Esophagus squamous epithelium (tissue), 5 donors: ENCODE measurements at regions of chr5 and their contacts with region 1.

Region 1: GRCh38 chr5:81751009-81751835 is at the start of gene SSBP2:
- DNase-seq: peak; percentile 99
- H3K4me3 ChIP-seq: peak within 1 kb of the TSS; percentile 73 to 97 (median 78)
- H3K27ac ChIP-seq: peak within 1 kb of the TSS; percentile 94 to 99 (median 99)
- H3K4me1 ChIP-seq: peaks cover 11 to 78% (median 31%) of the 10 kb centered on the region in 3 donors
- H3K27me3 ChIP-seq: no peaks in the 10 kb centered on the region
- CTCF ChIP-seq: peak in 1 of 6 experiments; percentile 17
- POLR2A ChIP-seq: peak in 3 of 4 donors; percentile 43 to 81 (median 60)
- total RNA-seq, gene SSBP2: 17.1 to 80.3 (median 24.2) TPM

Region 2: DNA sequence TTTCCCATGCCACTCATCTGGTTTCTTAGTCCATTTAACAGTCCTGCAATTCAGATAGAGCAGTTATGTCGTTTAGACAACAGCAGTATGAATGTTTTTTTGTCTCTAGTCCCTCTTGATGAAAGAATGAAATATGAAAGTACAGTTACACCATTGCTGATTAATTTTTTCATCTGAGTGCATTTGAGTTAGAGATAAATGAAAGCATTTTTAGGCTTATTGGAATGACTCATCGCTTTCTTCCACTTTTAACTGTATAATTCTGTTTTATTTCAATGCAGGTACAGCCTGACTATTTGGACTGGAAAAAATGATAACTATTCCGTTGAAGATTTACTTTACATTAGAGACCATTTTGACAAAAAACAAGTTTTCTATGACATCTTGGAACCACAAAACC is 1209.8 kb before region 1 on chr5:
- intact Hi-C with region 1: no loop called
- DNase-seq: no peak
- H3K4me3 ChIP-seq: no peak overlapping the region
- H3K27ac ChIP-seq: no peak overlapping the region
- H3K4me1 ChIP-seq: no peaks in the 10 kb centered on the region
- H3K27me3 ChIP-seq: no peaks in the 10 kb centered on the region
- CTCF ChIP-seq: no peak
- POLR2A ChIP-seq: no peak

Region 3: GRCh38 chr5:81425569-81425968 is 325.7 kb before region 1 on chr5:
- intact Hi-C with region 1: loop called (anchors 10 kb)
- DNase-seq: no peak
- H3K4me3 ChIP-seq: no peak overlapping the region
- H3K27ac ChIP-seq: peak overlapping the region in 2 of 4 donors; percentile 38 to 47
- H3K4me1 ChIP-seq: peaks cover 4 to 49% (median 7%) of the 10 kb centered on the region in 3 donors
- H3K27me3 ChIP-seq: no peaks in the 10 kb centered on the region
- CTCF ChIP-seq: peak in 5 of 6 experiments; percentile 38 to 65 (median 53)
- POLR2A ChIP-seq: no peak

Region 4: GRCh38 chr5:81506900-81507588 is 244.2 kb before region 1 on chr5:
- intact Hi-C with region 1: loop called (anchors 10 kb)
- DNase-seq: no peak
- H3K4me3 ChIP-seq: no peak overlapping the region
- H3K27ac ChIP-seq: peak overlapping the region in 2 of 4 donors; percentile 35 to 38
- H3K4me1 ChIP-seq: peaks cover 0 to 13% (median 0%) of the 10 kb centered on the region in 3 donors
- H3K27me3 ChIP-seq: no peaks in the 10 kb centered on the region
- CTCF ChIP-seq: peak; percentile 45 to 91 (median 80)
- POLR2A ChIP-seq: no peak

Region 5: GRCh38 chr5:81787474-81788242 is 36.4 kb after region 1 on chr5:
- intact Hi-C with region 1: loop called (anchors 5 kb)
- DNase-seq: no peak
- H3K4me3 ChIP-seq: peak overlapping the region in 1 of 4 donors; percentile 27
- H3K27ac ChIP-seq: peak overlapping the region; percentile 12 to 81 (median 60)
- H3K4me1 ChIP-seq: peaks cover 16 to 49% (median 30%) of the 10 kb centered on the region in 3 donors
- H3K27me3 ChIP-seq: no peaks in the 10 kb centered on the region
- CTCF ChIP-seq: no peak
- POLR2A ChIP-seq: no peak

Region 6: GRCh38 chr5:81851481-81852178 is 100.4 kb after region 1 on chr5:
- intact Hi-C with region 1: loop called (anchors 2 kb)
- DNase-seq: peak; percentile 62
- H3K4me3 ChIP-seq: peak overlapping the region; percentile 26 to 73 (median 49)
- H3K27ac ChIP-seq: peak overlapping the region; percentile 71 to 94 (median 86)
- H3K4me1 ChIP-seq: peaks cover 23 to 91% (median 37%) of the 10 kb centered on the region in 3 donors
- H3K27me3 ChIP-seq: no peaks in the 10 kb centered on the region
- CTCF ChIP-seq: peak in 2 of 6 experiments; percentile 10 to 22
- POLR2A ChIP-seq: peak in 1 of 4 donors; percentile 52

Region 7: DNA sequence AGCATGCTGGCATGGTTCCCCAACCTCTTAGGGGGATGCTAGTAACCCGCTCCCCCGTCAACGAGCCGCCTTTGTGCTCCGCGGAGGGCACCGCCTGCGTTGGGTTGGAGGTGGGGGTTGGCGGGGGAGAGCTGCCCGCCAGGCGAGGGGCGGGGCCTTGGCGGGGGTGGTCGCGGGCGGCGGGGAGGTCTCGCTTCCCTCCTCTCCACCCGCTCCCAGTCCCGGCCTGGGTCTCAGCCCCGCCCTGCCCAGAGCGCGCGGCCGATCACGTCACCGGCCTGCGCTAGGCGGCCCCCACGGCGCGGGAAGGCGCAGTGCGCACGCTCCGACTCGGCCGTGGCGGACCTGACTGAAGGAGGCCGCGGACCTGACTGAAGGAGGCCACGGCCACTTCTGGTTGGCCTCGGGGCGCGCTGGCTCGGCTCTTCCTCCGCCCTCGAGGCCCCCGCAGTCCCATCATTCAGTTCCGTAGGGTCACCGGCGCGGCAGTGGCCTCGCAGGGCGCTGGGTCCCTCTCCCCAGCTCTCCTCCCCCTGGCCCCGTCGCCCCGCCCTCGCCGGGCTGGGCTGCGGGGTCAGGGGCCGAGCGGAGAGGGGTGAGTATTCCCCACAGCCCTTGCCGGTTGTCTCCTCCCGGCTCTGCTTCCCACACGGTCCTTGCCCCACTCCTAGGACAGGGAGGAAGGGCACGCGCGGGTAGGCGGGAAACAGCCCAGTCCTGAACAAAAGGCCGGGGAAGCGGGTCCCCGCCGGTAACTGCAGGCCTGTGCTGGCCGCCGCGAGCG is 220.7 kb after region 1 on chr5 and contains the start of gene ATG10:
- intact Hi-C with region 1: loop called (anchors 10 kb)
- DNase-seq: peak; percentile 50
- H3K4me3 ChIP-seq: peak within 1 kb of the TSS; percentile 68 to 94 (median 78)
- H3K27ac ChIP-seq: peak within 1 kb of the TSS; percentile 92 to 100 (median 98)
- H3K4me1 ChIP-seq: peaks cover 0 to 33% (median 6%) of the 10 kb centered on the region in 3 donors
- H3K27me3 ChIP-seq: no peaks in the 10 kb centered on the region
- CTCF ChIP-seq: no peak
- POLR2A ChIP-seq: peak in 3 of 4 donors; percentile 91 to 98 (median 94)
- total RNA-seq, gene ATG10: 3.1 to 7.8 (median 6.1) TPM